Dendritic cell treated with granulocyte-macrophage colony-stimulating factor and Interleukin-4, amounts not matched to agents 40 ng/mL and 50 ng/mL, for 4 days (primary cell): ENCODE measurements at regions of chr19 and their contacts with region 1.

Region 1: GRCh38 chr19:27966390-27966816 is 1246.5 kb downstream of the UQCRFS1 start:
- H3K4me3 Mint-ChIP-seq: no peak overlapping the region
- H3K27ac Mint-ChIP-seq: no peak overlapping the region
- H3K4me1 Mint-ChIP-seq: no peaks in the 10 kb centered on the region
- H3K27me3 Mint-ChIP-seq: no peaks in the 10 kb centered on the region

Region 2: DNA sequence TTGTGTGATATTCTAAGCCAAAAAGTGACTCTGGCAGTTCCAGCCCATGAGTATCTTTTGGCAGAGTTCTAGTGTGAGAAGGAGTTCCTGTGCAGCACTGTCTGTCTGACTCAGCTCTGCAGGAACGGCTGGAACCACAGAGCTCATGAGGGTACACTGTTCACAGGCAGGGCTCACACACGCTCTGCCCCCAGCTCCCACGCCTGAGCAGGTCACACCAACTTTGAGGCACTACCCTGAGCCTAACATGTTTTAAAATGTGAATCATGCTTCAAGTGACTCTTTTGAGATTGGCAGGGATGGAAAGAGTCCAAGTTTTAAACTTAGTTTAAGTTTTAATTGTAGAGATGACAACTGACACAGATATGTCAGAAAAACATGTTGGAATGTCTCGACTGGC is 43.3 kb after region 1 on chr19:
- intact Hi-C with region 1: no loop called
- H3K4me3 Mint-ChIP-seq: no peak overlapping the region
- H3K27ac Mint-ChIP-seq: no peak overlapping the region
- H3K4me1 Mint-ChIP-seq: no peaks in the 10 kb centered on the region
- H3K27me3 Mint-ChIP-seq: no peaks in the 10 kb centered on the region

Region 3: GRCh38 chr19:28324275-28325060 is 358.1 kb after region 1 on chr19:
- intact Hi-C with region 1: loop called (anchors 5 kb)
- H3K4me3 Mint-ChIP-seq: no peak overlapping the region
- H3K27ac Mint-ChIP-seq: no peak overlapping the region
- H3K4me1 Mint-ChIP-seq: peaks cover 5% of the 10 kb centered on the region
- H3K27me3 Mint-ChIP-seq: no peaks in the 10 kb centered on the region

Region 4: GRCh38 chr19:28710278-28710677 is 743.9 kb after region 1 on chr19:
- intact Hi-C with region 1: loop called (anchors 1 kb)
- H3K4me3 Mint-ChIP-seq: no peak overlapping the region
- H3K27ac Mint-ChIP-seq: no peak overlapping the region
- H3K4me1 Mint-ChIP-seq: no peaks in the 10 kb centered on the region
- H3K27me3 Mint-ChIP-seq: peaks cover 1% of the 10 kb centered on the region